Astrocyte of the cerebellum (primary cell): ENCODE measurements at regions of chr20 and their contacts with region 1.

Region 1: GRCh38 chr20:54227241-54227640 is 19.4 kb downstream of the PFDN4 start:
- DNase-seq: no peak
- H3K4me3 ChIP-seq: no peak overlapping the region
- CTCF ChIP-seq: no peak

Region 2: DNA sequence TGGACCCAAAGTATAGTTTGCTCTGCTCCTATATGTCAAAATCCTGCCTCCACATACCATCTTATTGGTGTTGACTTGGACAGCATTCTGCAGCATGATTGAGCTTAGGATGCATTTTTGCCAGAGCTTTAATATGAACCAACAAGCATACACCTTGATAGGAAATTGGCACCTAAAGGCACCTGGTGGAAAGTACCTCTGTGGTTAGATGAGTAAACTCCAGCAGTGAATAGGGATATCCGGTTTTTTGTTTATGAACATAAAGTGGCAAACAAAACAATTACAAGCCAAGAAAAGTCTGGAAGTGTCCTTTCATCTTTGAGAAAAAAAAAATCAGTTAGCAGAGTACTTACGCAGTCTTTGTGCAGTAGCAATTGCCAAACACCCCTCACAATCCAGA is 47.3 kb before region 1 on chr20:
- in situ Hi-C with region 1: no loop called
- DNase-seq: no peak
- H3K4me3 ChIP-seq: no peak overlapping the region
- CTCF ChIP-seq: no peak

Region 3: DNA sequence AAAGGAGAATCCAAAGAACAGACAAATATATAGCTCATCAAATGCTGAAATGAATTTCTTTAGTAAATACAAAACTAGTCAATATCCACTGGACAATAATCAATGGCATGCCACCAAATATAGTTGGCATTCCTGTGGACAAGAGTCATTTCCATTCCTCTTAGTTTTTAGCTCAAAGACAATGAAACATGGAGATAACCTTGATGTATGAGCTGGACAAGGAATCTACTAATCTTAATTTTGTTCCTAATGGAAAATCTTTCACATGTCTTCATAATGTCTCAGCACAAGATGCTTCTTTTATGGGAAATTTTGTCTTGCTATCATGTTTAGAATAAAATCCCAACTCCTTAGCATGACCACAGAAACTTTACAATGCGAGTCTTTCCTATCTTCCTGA is 68.4 kb after region 1 on chr20:
- in situ Hi-C with region 1: no loop called
- DNase-seq: no peak
- H3K4me3 ChIP-seq: no peak overlapping the region
- CTCF ChIP-seq: no peak

Region 4: GRCh38 chr20:54407459-54407858 is 180.2 kb after region 1 on chr20:
- in situ Hi-C with region 1: no loop called
- DNase-seq: no peak
- H3K4me3 ChIP-seq: no peak overlapping the region
- CTCF ChIP-seq: no peak

Region 5: DNA sequence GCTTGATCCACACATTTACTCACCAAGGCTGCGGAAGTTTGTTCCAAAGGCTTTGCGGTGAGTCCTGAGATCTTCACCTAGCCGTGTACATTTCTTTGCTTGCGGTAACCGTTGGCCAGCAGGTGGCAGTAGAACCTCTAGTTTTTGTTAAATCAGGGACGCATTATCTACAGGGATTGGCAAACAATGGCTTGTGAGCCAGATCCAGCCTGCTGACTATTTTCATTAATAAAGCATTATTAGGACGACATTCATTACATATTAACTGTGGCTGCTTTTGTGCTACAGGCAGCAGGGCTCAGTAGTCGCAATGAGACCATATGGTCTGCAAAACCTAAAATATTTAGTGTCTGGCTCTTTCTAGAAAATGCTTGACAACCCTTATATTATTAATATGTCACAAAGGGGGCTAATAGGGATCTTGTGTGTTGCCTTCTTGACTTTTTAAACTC is 422.3 kb after region 1 on chr20:
- in situ Hi-C with region 1: loop called (anchors 25 kb)
- DNase-seq: peak; percentile 73
- H3K4me3 ChIP-seq: no peak overlapping the region
- CTCF ChIP-seq: peak; percentile 83